ENCODE measurements at regions of chr10 and their contacts with region 1.

Region 1: DNA sequence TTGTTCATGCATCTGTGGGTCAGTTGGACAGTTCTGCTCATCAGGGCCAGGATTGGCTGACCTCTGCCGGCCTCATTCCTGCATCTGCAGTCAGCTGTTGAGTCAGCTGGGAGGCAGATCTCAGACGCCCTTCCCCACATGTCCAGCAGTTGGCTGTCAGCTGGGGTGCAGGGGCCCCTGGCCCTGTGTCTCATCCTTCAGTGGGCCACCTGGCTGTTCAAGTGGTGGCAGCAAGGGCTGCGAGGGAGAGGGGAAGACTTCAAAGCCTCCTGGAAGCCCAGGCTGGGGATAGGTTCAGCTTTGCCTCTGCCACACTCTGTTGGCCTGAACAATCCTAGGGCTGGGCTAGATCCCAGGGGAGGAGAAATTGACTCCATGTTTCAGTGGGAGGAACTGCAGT is 33.2 kb downstream of the TACR2 start:
- DNase-seq: peak; percentile 22
- H3K4me3 ChIP-seq: no peak overlapping the region
- H3K27me3 ChIP-seq: no peaks in the 10 kb centered on the region
- CTCF ChIP-seq: peak; percentile 44; the same call in 1 of the 2 replicates

Region 2: DNA sequence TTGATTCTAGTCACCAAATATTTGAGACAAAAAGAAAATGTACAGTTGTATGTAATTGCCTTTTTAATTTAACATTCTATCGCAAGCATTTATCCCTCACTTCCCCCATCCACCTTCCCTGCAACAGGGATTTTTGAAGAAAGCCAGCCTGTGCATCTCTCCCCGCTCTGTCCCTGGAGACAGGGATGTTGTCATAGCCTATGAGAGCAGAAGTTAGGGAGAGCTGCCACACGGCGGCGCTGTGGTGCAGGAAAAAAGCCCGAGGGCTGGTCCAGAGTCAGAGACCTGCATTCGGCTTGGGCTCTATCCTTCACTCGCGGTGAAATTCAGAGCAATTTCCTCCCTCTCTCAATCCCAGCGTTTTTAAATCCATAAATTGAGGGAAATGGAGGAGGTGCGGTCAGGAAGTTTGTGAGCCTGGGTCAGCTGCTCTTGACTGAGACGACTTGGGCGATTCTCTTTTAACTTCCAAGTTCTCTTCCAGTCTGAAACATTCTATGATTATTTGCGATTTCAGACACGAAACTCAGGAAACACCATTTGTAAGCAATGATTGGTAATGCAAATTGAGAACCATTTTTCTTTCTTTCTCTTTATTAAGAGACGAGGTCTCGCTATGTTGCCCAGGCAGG is 145.9 kb before region 1 on chr10:
- CTCF ChIA-PET with region 1: interaction called, 35 read pairs
- POLR2A ChIA-PET with region 1: no interaction called
- DNase-seq: no peak
- H3K4me3 ChIP-seq: no peak overlapping the region
- H3K27me3 ChIP-seq: no peaks in the 10 kb centered on the region
- CTCF ChIP-seq: peak; percentile 94

Region 3: DNA sequence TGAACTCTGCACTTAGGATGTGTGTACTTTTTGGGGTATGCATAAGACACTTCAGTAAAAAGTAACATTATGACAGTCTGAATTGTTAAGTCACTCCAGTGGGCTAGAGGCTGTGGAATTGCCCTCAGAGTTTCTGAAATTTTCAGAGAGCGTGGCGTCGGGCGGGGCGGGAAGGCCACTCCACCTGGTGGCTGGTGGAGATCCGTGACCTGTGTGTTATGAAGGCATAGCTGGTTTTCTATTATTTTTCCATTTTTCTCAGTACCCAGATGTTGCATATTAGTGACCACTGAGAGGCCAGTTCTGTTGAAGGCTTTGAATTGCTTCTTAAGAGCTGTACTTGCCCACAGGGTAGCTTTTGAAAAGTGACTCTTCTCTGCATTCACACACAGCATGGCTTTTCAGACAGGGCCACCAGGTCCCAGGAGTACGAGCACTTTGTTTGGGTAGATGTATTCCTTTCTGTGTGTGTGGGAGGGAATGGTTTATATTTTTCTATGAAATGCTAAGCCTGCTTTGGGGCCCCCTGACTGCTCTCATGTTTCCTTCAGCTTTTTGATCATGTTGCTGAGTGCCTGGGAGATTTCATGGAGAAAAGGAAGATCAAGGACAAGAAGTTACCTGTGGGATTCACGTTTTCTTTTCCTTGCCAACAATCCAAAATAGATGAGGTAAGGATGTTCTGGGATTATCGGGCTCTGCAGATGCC is 19.2 kb before region 1 on chr10:
- CTCF ChIA-PET with region 1: interaction called, 10 read pairs
- POLR2A ChIA-PET with region 1: no interaction called
- DNase-seq: no peak
- H3K4me3 ChIP-seq: no peak overlapping the region
- H3K27me3 ChIP-seq: no peaks in the 10 kb centered on the region
- CTCF ChIP-seq: no peak

Region 4: GRCh38 chr10:69895759-69896158 is 512.2 kb after region 1 on chr10:
- CTCF ChIA-PET with region 1: no interaction called
- POLR2A ChIA-PET with region 1: no interaction called
- DNase-seq: peak; percentile 71
- H3K4me3 ChIP-seq: no peak overlapping the region
- H3K27me3 ChIP-seq: no peaks in the 10 kb centered on the region
- CTCF ChIP-seq: no peak

Measured in BJ (cell line).